CD4-positive, alpha-beta T cell (primary cell): ENCODE measurements at regions of chr12 and their contacts with region 1.

Region 1: DNA sequence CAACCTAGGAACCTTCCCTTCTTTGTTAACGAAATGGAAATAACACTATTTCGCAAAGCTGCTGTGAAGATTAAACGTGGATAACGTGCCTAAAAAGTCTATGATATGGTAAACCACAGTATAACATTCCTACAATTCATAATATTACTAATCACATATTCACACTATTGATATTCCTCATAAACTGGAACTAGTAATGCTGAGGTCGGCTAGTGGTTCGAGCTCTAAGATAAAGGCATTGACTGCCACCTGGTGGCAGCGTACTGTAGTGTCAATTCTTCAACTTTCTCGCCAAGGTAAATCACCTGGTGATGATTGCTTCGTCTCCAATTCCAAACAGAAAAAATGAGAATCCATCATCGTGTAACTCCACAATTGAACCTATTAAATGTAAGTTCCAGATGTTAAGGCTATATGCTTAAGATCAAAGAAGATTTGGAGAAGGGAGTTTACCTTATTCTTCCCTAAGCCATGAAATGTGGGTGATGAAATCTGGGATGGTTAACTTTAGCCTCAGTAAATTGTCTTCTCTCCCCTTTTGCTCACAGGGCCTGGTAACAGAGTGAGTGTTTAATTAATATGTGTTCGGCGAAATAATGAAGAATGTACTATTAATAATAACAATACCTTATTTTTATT is 197.5 kb upstream of the TMEM132C start:
- DNase-seq: peak in 3 of 14 experiments; percentile 9 to 16 (median 10)
- ATAC-seq: no peak
- H3K4me3 ChIP-seq: no peak overlapping the region
- H3K4me3 Mint-ChIP-seq: no peak overlapping the region
- H3K27ac ChIP-seq: no peak overlapping the region
- H3K27ac Mint-ChIP-seq: no peak overlapping the region
- H3K4me1 ChIP-seq: no peaks in the 10 kb centered on the region
- H3K4me1 Mint-ChIP-seq: no peaks in the 10 kb centered on the region
- H3K27me3 ChIP-seq: no peaks in the 10 kb centered on the region
- H3K27me3 Mint-ChIP-seq: peaks cover 6% of the 10 kb centered on the region
- CTCF ChIP-seq: no peak

Region 2: GRCh38 chr12:126651133-126651532 is 1418.3 kb before region 1 on chr12:
- CTCF ChIA-PET with region 1: no interaction called
- POLR2A ChIA-PET with region 1: no interaction called
- intact Hi-C with region 1: loop called in 1 of 2 experiments (anchors 10 kb)
- DNase-seq: no peak
- ATAC-seq: no peak
- H3K4me3 ChIP-seq: no peak overlapping the region
- H3K4me3 Mint-ChIP-seq: no peak overlapping the region
- H3K27ac ChIP-seq: no peak overlapping the region
- H3K27ac Mint-ChIP-seq: no peak overlapping the region
- H3K4me1 ChIP-seq: no peaks in the 10 kb centered on the region
- H3K4me1 Mint-ChIP-seq: no peaks in the 10 kb centered on the region
- H3K27me3 ChIP-seq: no peaks in the 10 kb centered on the region
- H3K27me3 Mint-ChIP-seq: no peaks in the 10 kb centered on the region
- CTCF ChIP-seq: no peak